ENCODE measurements at regions of chr6 and their contacts with region 1.

Region 1: GRCh38 chr6:14452567-14453527 is 335.3 kb downstream of the CD83 start:
- DNase-seq: peak; percentile 81
- H3K4me3 Mint-ChIP-seq: peak overlapping the region; percentile 63
- H3K27ac Mint-ChIP-seq: peak overlapping the region; percentile 90
- H3K4me1 Mint-ChIP-seq: peaks cover 91% of the 10 kb centered on the region
- H3K27me3 Mint-ChIP-seq: no peaks in the 10 kb centered on the region

Region 2: GRCh38 chr6:14375930-14376329 is 76.9 kb before region 1 on chr6:
- intact Hi-C with region 1: loop called (anchors 2 kb)
- DNase-seq: no peak
- H3K4me3 Mint-ChIP-seq: no peak overlapping the region
- H3K27ac Mint-ChIP-seq: no peak overlapping the region
- H3K4me1 Mint-ChIP-seq: peaks cover 49% of the 10 kb centered on the region
- H3K27me3 Mint-ChIP-seq: no peaks in the 10 kb centered on the region

Region 3: GRCh38 chr6:14542670-14543366 is 90.0 kb after region 1 on chr6:
- intact Hi-C with region 1: loop called (anchors 1 kb)
- DNase-seq: peak; percentile 23
- H3K4me3 Mint-ChIP-seq: no peak overlapping the region
- H3K27ac Mint-ChIP-seq: peak overlapping the region; percentile 76
- H3K4me1 Mint-ChIP-seq: peaks cover 31% of the 10 kb centered on the region
- H3K27me3 Mint-ChIP-seq: no peaks in the 10 kb centered on the region

Region 4: DNA sequence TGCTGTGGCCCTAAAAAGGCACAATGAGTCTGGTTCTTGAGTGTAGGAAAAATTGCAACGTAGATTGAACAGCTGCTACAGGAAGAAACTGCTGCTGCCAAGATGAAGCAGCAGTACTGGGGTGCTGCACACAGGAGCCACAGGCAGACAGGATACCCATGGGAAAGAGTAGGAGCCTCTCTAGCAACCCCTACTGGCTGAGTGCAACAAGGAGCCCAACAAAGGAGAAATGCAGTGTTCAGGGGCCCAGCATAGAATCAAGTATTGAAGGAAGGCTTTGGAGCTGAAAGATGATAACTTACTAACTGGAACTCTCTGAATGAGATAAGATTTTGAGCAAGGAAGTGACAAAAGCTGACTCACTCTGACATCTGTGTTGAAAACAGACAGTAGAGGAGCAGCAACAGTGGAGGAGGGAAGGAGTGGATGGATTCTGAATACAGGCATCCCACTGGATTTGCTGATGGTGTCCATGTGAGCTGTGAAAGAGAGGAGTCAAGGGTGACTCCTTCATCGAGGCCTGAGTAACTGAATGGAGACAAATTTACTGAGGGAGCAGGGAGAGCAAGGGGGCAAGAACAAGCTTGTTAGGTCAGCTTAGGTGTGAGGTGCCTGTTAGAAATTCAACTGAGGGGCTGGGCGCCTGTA is 258.3 kb after region 1 on chr6:
- intact Hi-C with region 1: loop called (anchors 1 kb)
- DNase-seq: peak; percentile 63
- H3K4me3 Mint-ChIP-seq: peak overlapping the region; percentile 75
- H3K27ac Mint-ChIP-seq: peak overlapping the region; percentile 99
- H3K4me1 Mint-ChIP-seq: peaks cover 60% of the 10 kb centered on the region
- H3K27me3 Mint-ChIP-seq: no peaks in the 10 kb centered on the region

Region 5: DNA sequence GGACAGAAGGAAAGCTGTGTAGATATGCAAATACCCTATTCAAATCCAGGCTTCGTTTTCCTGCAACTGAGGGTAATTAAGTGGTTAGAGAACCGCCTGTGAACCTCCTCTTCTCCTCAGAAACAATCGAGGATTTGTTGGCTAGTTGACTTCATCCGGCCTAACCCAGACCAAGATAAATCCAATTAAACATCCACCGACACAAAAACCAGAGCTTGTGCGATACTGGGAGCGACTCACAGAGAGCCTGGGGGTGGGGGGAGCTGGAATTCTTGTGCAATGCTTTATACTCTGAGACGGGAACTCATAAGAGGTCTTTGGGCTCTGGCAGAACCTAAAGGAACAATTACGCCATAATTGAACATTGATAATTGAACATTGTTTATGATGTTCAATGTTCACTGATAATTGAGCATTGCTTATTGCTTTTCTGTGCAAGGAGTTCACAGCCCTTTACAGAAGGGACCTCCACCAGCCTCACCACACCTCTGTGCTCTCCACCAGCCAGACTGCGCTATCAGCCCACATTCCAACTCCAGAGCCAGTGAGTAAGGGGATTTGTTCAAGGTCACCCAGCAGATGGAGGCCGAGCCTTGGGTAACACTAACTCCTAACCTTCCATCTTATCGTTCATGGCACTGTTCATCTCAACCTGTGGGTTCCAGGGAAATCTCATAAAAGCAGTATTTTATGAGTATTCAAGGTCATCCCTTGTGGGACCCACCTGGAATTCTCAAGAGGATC is 363.4 kb after region 1 on chr6:
- intact Hi-C with region 1: loop called (anchors 2 kb)
- DNase-seq: no peak
- H3K4me3 Mint-ChIP-seq: no peak overlapping the region
- H3K27ac Mint-ChIP-seq: no peak overlapping the region
- H3K4me1 Mint-ChIP-seq: peaks cover 17% of the 10 kb centered on the region
- H3K27me3 Mint-ChIP-seq: no peaks in the 10 kb centered on the region

Region 6: GRCh38 chr6:15299430-15300131 is 846.7 kb after region 1 on chr6:
- intact Hi-C with region 1: loop called (anchors 10 kb)
- DNase-seq: peak; percentile 46
- H3K4me3 Mint-ChIP-seq: peak overlapping the region; percentile 53
- H3K27ac Mint-ChIP-seq: peak overlapping the region; percentile 68
- H3K4me1 Mint-ChIP-seq: peaks cover 74% of the 10 kb centered on the region
- H3K27me3 Mint-ChIP-seq: no peaks in the 10 kb centered on the region

Measured in activated T-helper 2 cell treated with anti-CD3 and anti-CD28 coated beads, Interferon-gamma antibody, Interleukin-2, Interleukin-4, amounts not matched to agents 10 μg/mL and 5 μg/mL and 100 μg/mL, durations not matched to agents 14 hours and 24 hours and 36 hours (primary cell).